ENCODE measurements at regions of chr6 and their contacts with region 1.

Region 1: DNA sequence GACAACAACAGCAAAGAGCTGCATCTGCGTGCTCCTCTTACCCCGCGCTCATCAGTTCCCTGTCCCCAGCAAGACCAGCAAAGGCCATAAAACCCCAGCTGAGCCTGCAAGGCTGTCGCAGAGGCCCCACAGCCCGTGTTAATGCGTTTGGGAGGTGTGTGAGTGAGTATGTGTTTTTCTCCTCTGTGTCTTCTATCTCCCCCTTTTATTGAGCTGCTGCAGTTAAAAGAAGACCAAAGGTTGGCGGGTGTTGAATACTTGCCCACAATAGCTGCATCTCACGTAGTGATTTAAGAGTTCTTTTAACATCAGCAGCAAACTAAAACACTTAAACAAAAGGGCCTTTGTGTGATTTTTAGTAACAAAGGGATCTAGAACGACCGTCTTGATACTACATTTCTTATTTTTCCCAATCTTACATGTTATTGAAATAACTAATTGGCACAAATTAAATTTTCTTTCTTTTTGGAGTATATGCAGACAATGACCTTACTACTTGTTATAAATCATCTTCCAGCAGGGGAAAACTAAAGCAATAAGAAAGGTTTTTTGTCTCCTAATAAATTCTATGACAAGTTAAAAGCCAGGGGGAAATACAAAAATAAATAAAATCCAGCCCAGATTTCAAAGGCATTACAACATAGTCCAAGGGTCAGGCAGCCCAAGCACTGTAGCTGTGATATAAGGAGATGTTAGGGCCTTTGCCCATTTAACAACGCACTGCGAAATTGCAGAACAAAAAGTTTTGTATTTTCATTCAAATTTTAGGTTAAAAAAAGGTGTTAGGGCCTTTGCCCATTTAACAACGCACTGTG is 27.2 kb upstream of the CNKSR3 start:
- DNase-seq: no peak
- H3K4me3 ChIP-seq: no peak overlapping the region
- H3K27ac ChIP-seq: peak overlapping the region in 2 of 4 donors; percentile 17 to 59
- H3K4me1 ChIP-seq: peaks cover 0 to 31% (median 14%) of the 10 kb centered on the region in 4 donors
- H3K27me3 ChIP-seq: no peaks in the 10 kb centered on the region
- CTCF ChIP-seq: no peak
- EP300 ChIP-seq: no peak
- POLR2A ChIP-seq: no peak

Region 2: DNA sequence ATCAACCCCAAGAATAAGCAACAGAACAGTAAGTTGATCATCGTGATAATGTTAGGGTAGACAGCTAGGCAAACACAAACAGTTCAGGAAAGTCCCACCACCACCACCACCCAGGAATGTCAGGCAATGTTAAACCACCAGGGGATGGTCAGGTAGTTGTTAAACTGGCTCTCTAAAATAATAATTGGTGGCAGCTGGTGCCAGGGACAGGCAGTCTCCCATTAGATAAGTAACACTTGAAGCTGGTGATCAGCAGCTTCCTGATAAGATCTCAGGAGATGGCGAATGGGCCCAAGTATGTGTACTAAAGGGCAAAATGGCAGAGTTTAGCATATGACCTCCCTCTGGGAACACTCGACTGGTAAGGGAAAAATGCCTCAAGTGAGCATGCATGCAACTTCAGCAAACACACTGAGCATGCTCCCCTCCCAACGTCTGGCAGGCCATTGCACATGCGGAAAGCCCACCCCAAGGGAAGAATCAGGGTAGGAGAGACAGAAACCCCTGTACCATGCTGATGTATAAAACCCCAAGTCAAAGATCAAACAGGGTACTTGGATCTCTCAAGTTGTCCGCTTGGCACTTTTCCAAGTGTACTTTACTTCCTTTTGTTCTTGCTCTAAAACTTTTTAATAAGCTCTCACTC is 247.7 kb before region 1 on chr6:
- intact Hi-C with region 1: loop called (anchors 10 kb)
- DNase-seq: no peak
- H3K4me3 ChIP-seq: no peak overlapping the region
- H3K27ac ChIP-seq: no peak overlapping the region
- H3K4me1 ChIP-seq: no peaks in the 10 kb centered on the region
- H3K27me3 ChIP-seq: no peaks in the 10 kb centered on the region
- CTCF ChIP-seq: no peak
- EP300 ChIP-seq: no peak
- POLR2A ChIP-seq: no peak

Measured in sigmoid colon (tissue), 7 donors.